ENCODE measurements at regions of chr3 and their contacts with region 1.

Region 1: GRCh38 chr3:128307029-128307633 is 153.8 kb downstream of the EEFSEC start:
- DNase-seq: no peak
- H3K4me3 ChIP-seq: no peak overlapping the region
- H3K4me3 Mint-ChIP-seq: no peak overlapping the region
- H3K27ac ChIP-seq: no peak overlapping the region
- H3K27ac Mint-ChIP-seq: peak overlapping the region in 1 of 7 donors; percentile 29
- H3K4me1 ChIP-seq: no peaks in the 10 kb centered on the region
- H3K4me1 Mint-ChIP-seq: peaks cover 4 to 10% (median 8%) of the 10 kb centered on the region in 4 donors
- H3K27me3 ChIP-seq: no peaks in the 10 kb centered on the region
- H3K27me3 Mint-ChIP-seq: no peaks in the 10 kb centered on the region

Region 2: GRCh38 chr3:128497387-128498126 is 190.4 kb after region 1 on chr3:
- CTCF ChIA-PET with region 1: no interaction called
- POLR2A ChIA-PET with region 1: no interaction called
- intact Hi-C with region 1: loop called (anchors 10 kb)
- DNase-seq: peak; percentile 62 to 71 (median 66)
- H3K4me3 ChIP-seq: peak overlapping the region in 1 of 2 donors; percentile 17
- H3K4me3 Mint-ChIP-seq: peak overlapping the region; percentile 72 to 89 (median 80)
- H3K27ac ChIP-seq: no peak overlapping the region
- H3K27ac Mint-ChIP-seq: peak overlapping the region in 1 of 7 donors; percentile 47
- H3K4me1 ChIP-seq: peaks cover 9% of the 10 kb centered on the region
- H3K4me1 Mint-ChIP-seq: peaks cover 2 to 26% (median 6%) of the 10 kb centered on the region in 4 donors
- H3K27me3 ChIP-seq: peaks cover 17% of the 10 kb centered on the region
- H3K27me3 Mint-ChIP-seq: peaks cover 37 to 55% of the 10 kb centered on the region in 2 donors

Region 3: GRCh38 chr3:128524374-128525299 is 217.5 kb after region 1 on chr3:
- CTCF ChIA-PET with region 1: no interaction called
- POLR2A ChIA-PET with region 1: no interaction called
- intact Hi-C with region 1: no loop called
- DNase-seq: no peak
- H3K4me3 ChIP-seq: no peak overlapping the region
- H3K4me3 Mint-ChIP-seq: no peak overlapping the region
- H3K27ac ChIP-seq: no peak overlapping the region
- H3K27ac Mint-ChIP-seq: no peak overlapping the region
- H3K4me1 ChIP-seq: no peaks in the 10 kb centered on the region
- H3K4me1 Mint-ChIP-seq: no peaks in the 10 kb centered on the region
- H3K27me3 ChIP-seq: no peaks in the 10 kb centered on the region
- H3K27me3 Mint-ChIP-seq: peaks cover 6 to 30% of the 10 kb centered on the region in 2 donors

Region 4: DNA sequence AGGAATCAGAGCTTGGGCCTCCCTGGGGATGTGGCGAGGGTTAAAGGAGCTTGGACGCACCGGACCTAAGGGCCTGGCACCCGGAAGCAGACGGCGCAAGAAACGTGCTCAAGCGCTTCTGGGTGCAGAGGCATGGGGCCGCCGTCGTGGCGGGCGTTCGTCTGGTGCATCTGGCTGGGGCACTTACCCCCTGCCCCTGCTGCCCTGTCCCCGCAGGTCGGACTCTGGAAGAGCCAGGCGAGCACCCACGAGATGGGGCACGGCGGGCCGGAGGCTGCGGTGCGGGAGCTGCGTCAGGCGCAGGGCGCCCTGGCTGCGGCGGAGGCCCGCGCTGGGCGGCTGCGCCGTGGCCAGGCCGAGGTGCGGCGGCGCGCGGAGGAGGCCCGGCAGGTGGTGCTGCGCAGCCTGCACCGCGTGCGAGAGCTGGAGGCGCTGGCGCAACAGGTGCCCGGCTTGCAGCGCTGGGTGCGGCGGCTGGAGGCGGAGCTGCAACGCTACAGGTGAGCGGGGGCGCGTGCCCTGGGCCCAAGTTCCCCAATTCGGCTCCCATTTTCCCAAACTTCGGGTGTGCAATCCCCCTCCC is 696.5 kb after region 1 on chr3:
- CTCF ChIA-PET with region 1: no interaction called
- POLR2A ChIA-PET with region 1: no interaction called
- intact Hi-C with region 1: no loop called
- DNase-seq: peak; percentile 50 to 64 (median 57)
- H3K4me3 ChIP-seq: no peak overlapping the region
- H3K4me3 Mint-ChIP-seq: peak overlapping the region in 4 of 8 donors; percentile 59 to 73 (median 64)
- H3K27ac ChIP-seq: no peak overlapping the region
- H3K27ac Mint-ChIP-seq: peak overlapping the region in 1 of 7 donors; percentile 47
- H3K4me1 ChIP-seq: peaks cover 36% of the 10 kb centered on the region
- H3K4me1 Mint-ChIP-seq: peaks cover 20 to 47% (median 32%) of the 10 kb centered on the region in 4 donors
- H3K27me3 ChIP-seq: peaks cover 25% of the 10 kb centered on the region
- H3K27me3 Mint-ChIP-seq: peaks cover 22 to 27% of the 10 kb centered on the region in 2 donors

Measured in CD4-positive, alpha-beta memory T cell (primary cell).